ENCODE measurements at regions of chr11 and their contacts with region 1.

Region 1: GRCh38 chr11:125592305-125593112 is at the start of gene STT3A:
- DNase-seq: peak; percentile 96 to 99
- H3K4me3 ChIP-seq: peak within 1 kb of the TSS; percentile 80
- H3K27ac ChIP-seq: peak within 1 kb of the TSS; percentile 89
- H3K4me1 ChIP-seq: peaks cover 30% of the 10 kb centered on the region
- H3K27me3 ChIP-seq: no peaks in the 10 kb centered on the region
- CTCF ChIP-seq: no peak
- total RNA-seq, gene STT3A: 86.1 and 113 TPM in 2 replicates

Region 2: GRCh38 chr11:124746621-124747243 is 845.8 kb before region 1 on chr11:
- CTCF ChIA-PET with region 1: no interaction called
- POLR2A ChIA-PET with region 1: no interaction called
- intact Hi-C with region 1: loop called (anchors 5 kb)
- DNase-seq: peak; percentile 84 to 92
- H3K4me3 ChIP-seq: peak overlapping the region; percentile 67
- H3K27ac ChIP-seq: peak overlapping the region; percentile 90
- H3K4me1 ChIP-seq: peaks cover 45% of the 10 kb centered on the region
- H3K27me3 ChIP-seq: no peaks in the 10 kb centered on the region
- CTCF ChIP-seq: peak; percentile 75

Region 3: GRCh38 chr11:125568970-125569914 is 23.3 kb before region 1 on chr11 and contains the start of gene EI24:
- CTCF ChIA-PET with region 1: no interaction called
- POLR2A ChIA-PET with region 1: interaction called, 6 read pairs
- intact Hi-C with region 1: loop called (anchors 1 kb)
- DNase-seq: peak; percentile 76 to 90
- H3K4me3 ChIP-seq: peak within 1 kb of the TSS; percentile 98
- H3K27ac ChIP-seq: peak within 1 kb of the TSS; percentile 41; the same call in 1 of the 2 replicates
- H3K4me1 ChIP-seq: peaks cover 11% of the 10 kb centered on the region; the same call in 1 of the 2 replicates
- H3K27me3 ChIP-seq: no peaks in the 10 kb centered on the region
- CTCF ChIP-seq: peak; percentile 66
- total RNA-seq, gene EI24: 69.7 and 88.2 TPM in 2 replicates

Region 4: DNA sequence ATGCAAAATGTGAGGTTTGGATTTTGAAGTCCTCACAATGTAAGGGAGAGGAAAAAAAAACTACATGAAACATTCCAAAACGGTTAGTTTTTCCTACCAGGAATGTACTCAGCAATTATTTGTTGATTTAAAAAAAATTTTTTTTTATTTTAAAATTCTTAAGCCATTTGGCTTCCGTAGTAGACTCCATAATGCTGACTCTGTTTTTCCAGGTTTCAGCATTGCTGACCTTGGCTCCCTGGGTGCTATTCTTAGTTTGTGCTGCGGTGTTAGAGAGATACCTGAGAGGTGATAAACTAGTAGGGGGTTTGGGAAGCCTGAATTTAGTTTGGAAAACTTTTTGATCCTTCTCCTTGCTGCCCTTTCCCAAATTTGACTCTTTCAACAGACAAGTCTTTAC is 10.7 kb after region 1 on chr11:
- CTCF ChIA-PET with region 1: no interaction called
- POLR2A ChIA-PET with region 1: interaction called, 14 read pairs
- intact Hi-C with region 1: no loop called
- DNase-seq: no peak
- H3K4me3 ChIP-seq: no peak overlapping the region
- H3K27ac ChIP-seq: no peak overlapping the region
- H3K4me1 ChIP-seq: no peaks in the 10 kb centered on the region
- H3K27me3 ChIP-seq: no peaks in the 10 kb centered on the region
- CTCF ChIP-seq: no peak

Region 5: GRCh38 chr11:125625630-125626287 is 33.2 kb after region 1 on chr11:
- CTCF ChIA-PET with region 1: no interaction called
- POLR2A ChIA-PET with region 1: interaction called, 8 read pairs
- intact Hi-C with region 1: loop called (anchors 1 kb)
- DNase-seq: peak; percentile 82 to 88
- H3K4me3 ChIP-seq: peak overlapping the region; percentile 71
- H3K27ac ChIP-seq: peak overlapping the region; percentile 77
- H3K4me1 ChIP-seq: peaks cover 15% of the 10 kb centered on the region
- H3K27me3 ChIP-seq: no peaks in the 10 kb centered on the region
- CTCF ChIP-seq: no peak

Region 6: GRCh38 chr11:125772834-125773505 is 180.5 kb after region 1 on chr11:
- CTCF ChIA-PET with region 1: no interaction called
- POLR2A ChIA-PET with region 1: no interaction called
- intact Hi-C with region 1: no loop called
- DNase-seq: no peak
- H3K4me3 ChIP-seq: no peak overlapping the region
- H3K27ac ChIP-seq: no peak overlapping the region
- H3K4me1 ChIP-seq: no peaks in the 10 kb centered on the region
- H3K27me3 ChIP-seq: peaks cover 49% of the 10 kb centered on the region
- CTCF ChIP-seq: no peak